IMR-90 (cell line): ENCODE measurements at regions of chr1 and their contacts with region 1.

Region 1: GRCh38 chr1:197200272-197200899 is 53.9 kb upstream of the ASPM start:
- DNase-seq: peak; percentile 31
- ATAC-seq: peak; percentile 1
- H3K4me3 ChIP-seq: peak overlapping the region; percentile 63
- H3K27ac ChIP-seq: peak overlapping the region; percentile 82
- H3K4me1 ChIP-seq: no peaks in the 10 kb centered on the region
- H3K27me3 ChIP-seq: no peaks in the 10 kb centered on the region
- CTCF ChIP-seq: no peak
- POLR2A ChIP-seq: no peak
- RAD21 ChIP-seq: no peak

Region 2: DNA sequence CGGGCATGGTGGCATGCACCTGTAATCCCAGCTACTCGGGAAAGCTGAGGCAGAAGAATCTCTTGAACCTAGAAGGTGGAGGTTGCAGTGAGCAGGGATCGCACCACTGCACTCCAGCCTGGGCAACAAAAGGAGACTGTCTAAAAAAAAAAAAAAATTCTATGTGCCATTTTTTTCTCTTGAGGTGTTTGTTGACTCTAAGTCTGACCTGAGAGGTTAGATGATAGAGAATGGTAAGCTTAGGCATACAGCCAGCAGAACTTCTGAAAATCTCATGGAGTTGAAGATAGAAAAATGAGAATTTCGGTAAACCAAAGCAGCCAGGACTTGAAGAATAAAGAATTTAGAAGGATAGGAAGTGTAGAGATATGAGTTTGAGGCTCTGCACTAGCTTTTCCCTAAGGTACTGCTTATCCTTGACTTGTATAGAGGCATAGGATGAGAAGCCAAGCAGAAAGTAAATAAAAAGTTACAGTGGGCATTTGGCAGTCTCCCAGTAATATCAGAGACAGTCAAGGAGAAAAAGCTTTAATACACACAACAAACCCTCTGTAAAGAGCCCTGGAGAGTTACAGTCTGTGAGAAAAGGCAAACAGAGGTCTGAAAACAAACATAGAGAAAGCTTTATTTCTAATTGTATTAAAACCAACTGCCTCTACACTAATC is 157.6 kb before region 1 on chr1:
- CTCF ChIA-PET with region 1: interaction called, 12 read pairs
- POLR2A ChIA-PET with region 1: no interaction called
- dilution Hi-C with region 1: no loop called
- in situ Hi-C with region 1: no loop called
- intact Hi-C with region 1: no loop called
- DNase-seq: no peak
- ATAC-seq: peak; percentile 24; the same call in 1 of the 2 replicates
- H3K4me3 ChIP-seq: no peak overlapping the region
- H3K27ac ChIP-seq: no peak overlapping the region
- H3K4me1 ChIP-seq: no peaks in the 10 kb centered on the region
- H3K27me3 ChIP-seq: no peaks in the 10 kb centered on the region
- CTCF ChIP-seq: no peak
- POLR2A ChIP-seq: no peak
- RAD21 ChIP-seq: no peak

Region 3: GRCh38 chr1:197268012-197268411 is 67.6 kb after region 1 on chr1 and contains the start of gene CRB1:
- CTCF ChIA-PET with region 1: no interaction called
- POLR2A ChIA-PET with region 1: no interaction called
- dilution Hi-C with region 1: no loop called
- in situ Hi-C with region 1: no loop called
- intact Hi-C with region 1: loop called (anchors 2 kb)
- DNase-seq: no peak
- ATAC-seq: no peak
- H3K4me3 ChIP-seq: no peak within 1 kb of the TSS
- H3K27ac ChIP-seq: no peak within 1 kb of the TSS
- H3K4me1 ChIP-seq: no peaks in the 10 kb centered on the region
- H3K27me3 ChIP-seq: no peaks in the 10 kb centered on the region
- CTCF ChIP-seq: no peak
- POLR2A ChIP-seq: no peak
- RAD21 ChIP-seq: no peak
- total RNA-seq, gene CRB1: under 0.01 TPM in 1 of 2 replicates, not detected in the other

Region 4: DNA sequence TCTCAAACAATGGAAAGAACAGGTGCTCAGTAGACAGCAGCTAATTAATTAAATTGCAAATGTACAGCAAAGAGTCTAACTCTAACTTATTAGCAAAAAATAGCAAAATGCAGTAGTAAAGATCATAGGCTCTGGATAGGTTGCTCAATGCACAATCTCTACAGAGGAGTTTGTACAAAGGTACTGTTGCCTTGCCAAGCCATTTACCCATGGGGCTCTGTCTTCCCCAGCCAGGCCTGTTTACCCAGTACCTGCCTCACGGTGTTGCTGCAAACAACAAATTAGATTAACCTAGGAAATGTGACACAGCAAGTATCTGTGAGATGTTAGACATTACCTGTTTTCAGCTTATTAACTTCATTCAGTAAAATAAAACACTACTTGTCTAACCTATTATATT is 352.9 kb after region 1 on chr1:
- CTCF ChIA-PET with region 1: no interaction called
- POLR2A ChIA-PET with region 1: no interaction called
- dilution Hi-C with region 1: no loop called
- in situ Hi-C with region 1: no loop called
- intact Hi-C with region 1: no loop called
- DNase-seq: no peak
- ATAC-seq: no peak
- H3K4me3 ChIP-seq: no peak overlapping the region
- H3K27ac ChIP-seq: no peak overlapping the region
- H3K4me1 ChIP-seq: no peaks in the 10 kb centered on the region
- H3K27me3 ChIP-seq: no peaks in the 10 kb centered on the region
- CTCF ChIP-seq: no peak
- POLR2A ChIP-seq: no peak
- RAD21 ChIP-seq: no peak

Region 5: DNA sequence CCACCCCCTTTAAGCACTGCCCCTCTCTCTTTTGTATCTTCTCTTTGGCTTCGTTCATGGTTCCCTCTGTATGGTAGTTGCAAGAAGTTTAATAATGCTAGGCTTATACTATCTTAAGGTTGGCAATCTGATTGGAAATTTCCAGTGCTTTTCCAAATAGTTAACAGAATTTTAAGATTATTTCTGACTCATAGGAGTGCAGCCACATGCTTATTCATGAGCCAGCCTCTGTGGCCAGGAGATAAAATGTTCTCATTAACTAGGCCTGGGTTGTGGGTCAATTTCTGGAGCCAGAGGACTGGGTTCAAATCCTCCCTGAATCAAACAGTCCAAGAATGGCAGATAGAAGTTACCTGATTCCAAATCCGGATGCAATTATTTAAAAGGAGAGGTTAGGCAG is 1236.9 kb after region 1 on chr1:
- CTCF ChIA-PET with region 1: no interaction called
- POLR2A ChIA-PET with region 1: no interaction called
- dilution Hi-C with region 1: no loop called
- in situ Hi-C with region 1: no loop called
- intact Hi-C with region 1: no loop called
- DNase-seq: peak; percentile 54
- ATAC-seq: peak; percentile 40; the same call in 1 of the 2 replicates
- H3K4me3 ChIP-seq: no peak overlapping the region
- H3K27ac ChIP-seq: no peak overlapping the region
- H3K4me1 ChIP-seq: no peaks in the 10 kb centered on the region; the same call in none of the 2 replicates
- H3K27me3 ChIP-seq: no peaks in the 10 kb centered on the region
- CTCF ChIP-seq: no peak
- POLR2A ChIP-seq: no peak
- RAD21 ChIP-seq: no peak